ENCODE measurements at regions of chr14 and their contacts with region 1.

Region 1: DNA sequence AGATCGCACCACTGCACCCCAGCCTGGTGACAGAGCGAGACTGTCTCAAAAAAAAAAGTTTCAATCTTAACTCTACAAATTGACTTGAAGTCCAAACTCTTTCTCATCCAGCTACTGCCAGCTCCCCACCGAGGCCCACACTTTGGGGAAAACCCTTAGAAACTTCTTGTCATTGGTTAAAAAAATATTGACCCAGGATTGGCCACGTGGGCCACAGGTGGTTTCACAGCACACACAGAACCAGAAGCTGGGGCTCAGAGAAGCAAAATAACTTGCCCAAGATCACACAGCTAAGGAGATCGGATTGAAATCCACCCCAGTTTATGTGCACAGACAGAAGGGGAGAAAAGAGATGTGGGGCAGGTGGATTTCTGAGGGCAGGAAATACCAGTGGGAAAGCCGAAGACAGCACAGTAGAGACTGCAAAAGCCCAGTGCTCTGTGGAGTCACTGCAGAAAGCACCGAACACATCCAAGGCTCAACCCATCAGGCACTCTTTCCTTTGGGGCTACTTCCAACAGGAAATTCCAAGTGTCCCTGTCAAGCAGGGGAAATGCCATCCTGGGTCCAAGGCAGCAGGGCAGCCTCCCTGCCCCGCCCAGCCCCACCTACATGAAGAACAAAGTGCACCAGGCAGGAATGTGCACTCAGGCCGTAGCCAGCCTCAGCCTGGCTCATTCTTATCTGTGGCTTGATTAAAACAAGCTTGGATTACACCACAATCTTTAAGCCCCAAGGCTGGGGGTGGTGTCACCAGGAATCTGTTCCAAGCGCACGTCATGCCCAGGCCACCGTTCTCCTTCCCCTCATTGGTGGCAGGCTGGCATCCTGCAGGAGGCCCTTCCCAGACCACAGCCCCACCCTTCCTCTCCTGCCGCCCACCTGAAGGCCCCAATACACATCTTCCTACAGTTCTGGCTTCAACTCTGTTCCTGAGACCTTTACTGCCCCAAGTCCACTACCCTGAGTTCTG is 72.5 kb downstream of the ITPK1 start:
- DNase-seq: peak; percentile 96
- H3K4me3 ChIP-seq: peak overlapping the region in 1 of 3 experiments; percentile 16
- H3K27ac ChIP-seq: peak overlapping the region; percentile 97
- H3K4me1 ChIP-seq: peaks cover 79% of the 10 kb centered on the region
- H3K27me3 ChIP-seq: no peaks in the 10 kb centered on the region
- CTCF ChIP-seq: no peak

Region 2: GRCh38 chr14:92945959-92946846 is 97.1 kb before region 1 on chr14:
- CTCF ChIA-PET with region 1: no interaction called
- dilution Hi-C with region 1: loop called (anchors 5 kb)
- in situ Hi-C with region 1: no loop called
- intact Hi-C with region 1: no loop called
- DNase-seq: peak; percentile 48
- H3K4me3 ChIP-seq: no peak overlapping the region
- H3K27ac ChIP-seq: no peak overlapping the region
- H3K4me1 ChIP-seq: peaks cover 9% of the 10 kb centered on the region
- H3K27me3 ChIP-seq: no peaks in the 10 kb centered on the region
- CTCF ChIP-seq: no peak

Region 3: GRCh38 chr14:93007225-93007997 is 35.8 kb before region 1 on chr14:
- CTCF ChIA-PET with region 1: no interaction called
- dilution Hi-C with region 1: loop called (anchors 5 kb)
- in situ Hi-C with region 1: no loop called
- intact Hi-C with region 1: no loop called
- DNase-seq: peak; percentile 59
- H3K4me3 ChIP-seq: no peak overlapping the region
- H3K27ac ChIP-seq: no peak overlapping the region
- H3K4me1 ChIP-seq: peaks cover 36% of the 10 kb centered on the region
- H3K27me3 ChIP-seq: no peaks in the 10 kb centered on the region
- CTCF ChIP-seq: no peak

Region 4: DNA sequence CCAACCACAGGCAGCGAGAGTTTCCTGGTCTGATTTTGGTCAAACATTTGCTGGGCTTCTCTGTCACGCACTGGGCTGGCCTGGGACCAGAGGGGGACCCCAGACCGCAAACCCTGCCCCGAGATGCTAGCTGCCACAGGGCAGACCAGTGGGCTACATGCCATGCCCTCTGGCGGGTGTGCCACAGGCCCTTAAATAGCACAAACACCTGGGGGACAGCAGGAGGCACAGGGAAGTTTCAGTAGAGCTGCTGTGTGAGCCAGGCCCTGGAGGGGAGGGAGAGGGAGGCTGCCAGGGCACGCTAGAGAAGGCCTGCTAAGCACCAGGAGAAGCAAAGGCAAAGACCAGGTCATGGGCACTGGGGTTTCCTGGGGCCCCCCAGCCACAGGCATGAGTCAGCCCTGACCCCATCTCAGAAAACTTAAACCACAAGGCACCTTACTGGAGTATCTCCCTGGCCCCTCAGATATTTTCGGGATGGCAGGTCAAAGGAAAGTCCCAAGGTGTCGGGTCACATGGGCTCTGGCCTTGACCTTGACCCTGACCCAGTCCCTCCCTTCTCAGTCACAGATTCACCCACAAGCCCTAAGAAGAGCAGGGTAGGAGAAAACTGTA is 43.3 kb after region 1 on chr14:
- CTCF ChIA-PET with region 1: no interaction called
- dilution Hi-C with region 1: no loop called
- in situ Hi-C with region 1: no loop called
- intact Hi-C with region 1: loop called (anchors 2 kb)
- DNase-seq: no peak
- H3K4me3 ChIP-seq: no peak overlapping the region
- H3K27ac ChIP-seq: peak overlapping the region; percentile 80
- H3K4me1 ChIP-seq: peaks cover 42% of the 10 kb centered on the region
- H3K27me3 ChIP-seq: no peaks in the 10 kb centered on the region
- CTCF ChIP-seq: no peak

Region 5: GRCh38 chr14:93137864-93138263 is 94.6 kb after region 1 on chr14:
- CTCF ChIA-PET with region 1: no interaction called
- dilution Hi-C with region 1: loop called (anchors 5 kb)
- in situ Hi-C with region 1: no loop called
- intact Hi-C with region 1: no loop called
- DNase-seq: peak; percentile 13
- H3K4me3 ChIP-seq: no peak overlapping the region
- H3K27ac ChIP-seq: no peak overlapping the region
- H3K4me1 ChIP-seq: peaks cover 6% of the 10 kb centered on the region
- H3K27me3 ChIP-seq: no peaks in the 10 kb centered on the region
- CTCF ChIP-seq: no peak

Region 6: GRCh38 chr14:94805680-94806288 is 1762.5 kb after region 1 on chr14:
- CTCF ChIA-PET with region 1: interaction called, 17 read pairs
- dilution Hi-C with region 1: no loop called
- in situ Hi-C with region 1: no loop called
- intact Hi-C with region 1: no loop called
- DNase-seq: no peak
- H3K4me3 ChIP-seq: no peak overlapping the region
- H3K27ac ChIP-seq: no peak overlapping the region
- H3K4me1 ChIP-seq: no peaks in the 10 kb centered on the region
- H3K27me3 ChIP-seq: no peaks in the 10 kb centered on the region
- CTCF ChIP-seq: no peak

Measured in mammary epithelial cell (primary cell).